Posterior vena cava (tissue), 2 donors: ENCODE measurements at regions of chr1 and their contacts with region 1.

Region 1: GRCh38 chr1:205523891-205524793 is 19.7 kb downstream of the CDK18 start:
- DNase-seq: peak; percentile 93

Region 2: GRCh38 chr1:205485338-205486228 is 38.6 kb before region 1 on chr1:
- intact Hi-C with region 1: loop called (anchors 1 to 2 kb)
- DNase-seq: peak; percentile 86

Region 3: DNA sequence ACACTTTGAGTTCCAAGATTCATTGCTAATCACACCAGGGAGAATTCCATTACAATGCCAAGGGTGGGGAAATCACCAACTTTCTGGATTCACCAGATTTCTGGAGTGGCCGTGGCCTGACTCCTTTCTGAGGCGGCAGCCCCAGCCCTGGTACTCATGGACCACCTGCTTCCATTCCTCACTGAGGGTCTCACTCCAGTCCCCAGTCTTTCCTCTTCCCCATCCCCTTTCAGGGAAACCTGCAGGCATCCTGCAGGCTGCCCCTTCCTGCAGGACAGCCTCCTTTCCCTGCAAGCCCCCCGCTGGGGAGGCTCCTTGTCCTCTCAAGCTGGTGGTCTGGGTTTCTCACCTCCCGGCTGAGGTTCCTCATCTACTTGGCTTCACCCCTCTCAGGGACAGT is 32.3 kb before region 1 on chr1:
- intact Hi-C with region 1: loop called (anchors 1 to 2 kb)
- DNase-seq: no peak